ENCODE measurements at regions of chr17 and their contacts with region 1.

Region 1: DNA sequence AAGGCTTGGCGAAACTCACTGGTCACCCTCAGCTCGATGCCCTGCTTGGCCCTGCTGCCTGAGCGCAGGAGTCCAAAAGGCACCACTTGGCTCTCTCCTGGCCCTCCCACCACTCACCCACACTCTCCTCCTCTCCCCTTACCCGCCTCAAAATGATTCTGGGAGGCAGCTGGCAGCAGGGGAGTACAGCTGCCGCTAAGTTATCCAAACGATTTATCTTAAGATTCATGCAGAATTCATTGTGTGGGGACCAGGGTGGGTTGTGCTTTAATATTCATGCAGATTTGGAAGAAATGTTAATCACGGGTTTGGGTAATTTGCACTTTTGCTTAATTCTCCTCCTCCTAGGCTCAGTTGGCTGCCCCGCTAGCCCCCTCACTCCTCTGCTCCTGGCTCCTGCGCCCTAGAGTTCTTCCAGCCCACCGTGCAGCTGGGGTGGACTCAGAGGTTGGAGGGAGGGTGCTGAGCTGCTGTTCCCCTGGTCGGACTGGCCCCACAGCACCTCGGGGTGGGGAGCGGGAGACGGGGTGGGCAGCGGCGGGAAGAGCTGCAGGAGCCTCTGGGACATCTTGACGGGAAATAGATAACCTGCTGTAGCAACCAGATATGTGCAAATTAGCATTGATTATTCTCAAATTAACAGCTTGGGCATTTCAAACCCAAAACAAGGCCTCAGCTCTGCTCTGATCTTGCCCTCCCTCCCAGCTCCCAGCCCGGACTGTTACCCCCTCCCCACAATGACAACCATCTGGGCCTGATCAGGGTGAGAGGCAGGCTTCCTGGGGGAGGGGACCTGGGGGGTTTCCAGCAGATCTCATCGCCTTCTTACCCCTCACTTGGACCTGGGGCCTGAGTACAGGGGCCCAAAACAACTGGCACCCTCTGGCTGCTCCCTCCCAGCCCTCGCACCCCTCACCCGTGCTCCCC is 122.6 kb upstream of the RPL38 start:
- DNase-seq: no peak

Region 2: GRCh38 chr17:74018115-74018514 is 62.8 kb before region 1 on chr17:
- intact Hi-C with region 1: no loop called
- DNase-seq: no peak

Region 3: GRCh38 chr17:74097450-74098135 is 16.7 kb after region 1 on chr17:
- intact Hi-C with region 1: loop called in 1 of 2 experiments (anchors 1 kb)
- DNase-seq: peak; percentile 22

Region 4: DNA sequence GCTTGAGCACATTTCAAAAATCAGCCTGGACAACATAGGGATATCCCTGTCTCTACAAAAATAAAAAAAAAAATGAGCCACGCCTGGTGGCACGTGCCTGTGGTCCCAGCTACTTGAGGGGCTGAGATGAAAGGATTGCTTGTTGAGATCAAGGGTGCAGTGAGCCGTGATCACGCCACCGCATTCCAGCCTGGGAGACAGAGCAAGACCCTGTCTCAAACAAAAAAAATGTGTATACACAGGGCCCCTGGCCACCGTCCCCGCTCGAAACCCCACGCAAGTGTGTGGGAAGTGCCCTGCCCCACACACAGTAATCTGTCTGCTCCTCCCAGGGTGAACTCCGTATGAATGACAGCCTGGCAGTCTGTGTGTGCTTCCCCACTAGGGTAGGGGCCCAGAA is 29.5 kb after region 1 on chr17:
- intact Hi-C with region 1: loop called in 1 of 2 experiments (anchors 1 kb)
- DNase-seq: no peak